Transverse colon (tissue), 4 donors: ENCODE measurements at regions of chr20 and their contacts with region 1.

Region 1: GRCh38 chr20:60372822-60373221 is 414.6 kb downstream of the CDH26 start:
- DNase-seq: no peak
- H3K4me3 ChIP-seq: no peak overlapping the region
- H3K27ac ChIP-seq: no peak overlapping the region
- H3K4me1 ChIP-seq: peaks cover 0 to 3% (median 0%) of the 10 kb centered on the region in 4 donors
- H3K27me3 ChIP-seq: no peaks in the 10 kb centered on the region
- CTCF ChIP-seq: no peak
- EP300 ChIP-seq: no peak
- POLR2A ChIP-seq: no peak

Region 2: GRCh38 chr20:60242836-60243505 is 129.9 kb before region 1 on chr20:
- in situ Hi-C with region 1: no loop called
- intact Hi-C with region 1: no loop called
- DNase-seq: no peak
- H3K4me3 ChIP-seq: no peak overlapping the region
- H3K27ac ChIP-seq: no peak overlapping the region
- H3K4me1 ChIP-seq: no peaks in the 10 kb centered on the region
- H3K27me3 ChIP-seq: no peaks in the 10 kb centered on the region
- CTCF ChIP-seq: no peak
- EP300 ChIP-seq: no peak
- POLR2A ChIP-seq: no peak

Region 3: GRCh38 chr20:60403105-60403741 is 30.4 kb after region 1 on chr20:
- in situ Hi-C with region 1: no loop called
- intact Hi-C with region 1: loop called (anchors 1 kb)
- DNase-seq: no peak
- H3K4me3 ChIP-seq: no peak overlapping the region
- H3K27ac ChIP-seq: no peak overlapping the region
- H3K4me1 ChIP-seq: no peaks in the 10 kb centered on the region
- H3K27me3 ChIP-seq: no peaks in the 10 kb centered on the region
- CTCF ChIP-seq: no peak
- EP300 ChIP-seq: no peak
- POLR2A ChIP-seq: no peak

Region 4: DNA sequence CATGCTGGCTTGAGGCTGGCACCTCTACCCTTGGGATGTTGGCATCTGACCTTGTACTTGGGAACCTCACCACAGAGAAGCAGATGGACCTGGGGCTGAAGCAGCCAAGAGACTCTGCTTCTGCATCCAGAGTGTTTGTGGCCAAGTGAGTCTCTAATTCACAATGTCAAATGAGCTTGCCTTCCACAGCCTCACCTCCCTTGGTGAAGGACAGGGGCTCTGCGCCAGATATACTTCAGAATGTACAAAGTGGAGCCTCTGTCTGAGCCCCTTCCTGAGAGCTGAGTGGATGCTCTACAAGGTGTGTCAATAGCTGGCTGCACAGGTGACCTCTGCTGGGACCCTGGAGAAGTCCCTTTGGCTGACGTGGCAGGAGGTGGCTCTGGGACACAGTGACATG is 94.3 kb after region 1 on chr20:
- in situ Hi-C with region 1: no loop called
- intact Hi-C with region 1: no loop called
- DNase-seq: no peak
- H3K4me3 ChIP-seq: no peak overlapping the region
- H3K27ac ChIP-seq: no peak overlapping the region
- H3K4me1 ChIP-seq: no peaks in the 10 kb centered on the region
- H3K27me3 ChIP-seq: no peaks in the 10 kb centered on the region
- CTCF ChIP-seq: no peak
- EP300 ChIP-seq: no peak
- POLR2A ChIP-seq: no peak

Region 5: DNA sequence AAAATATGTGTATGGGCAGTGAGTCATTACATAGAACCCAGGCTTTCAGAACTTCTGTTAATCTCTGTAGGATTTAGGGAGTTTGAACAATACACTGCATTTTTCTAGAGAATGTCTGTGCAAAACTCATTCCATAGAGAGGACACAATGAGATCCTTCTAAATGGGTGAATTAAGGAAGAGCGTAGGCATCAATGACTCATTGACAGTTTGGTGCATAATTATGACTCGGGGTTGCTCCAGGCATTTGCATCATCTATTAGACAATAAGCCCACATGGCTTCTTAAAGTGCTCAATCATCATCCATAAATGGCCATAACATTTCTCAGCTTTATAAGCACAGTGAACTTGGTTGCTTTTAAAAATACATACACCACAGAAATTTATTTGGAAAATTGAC is 210.9 kb after region 1 on chr20:
- in situ Hi-C with region 1: no loop called
- intact Hi-C with region 1: no loop called
- DNase-seq: no peak
- H3K4me3 ChIP-seq: no peak overlapping the region
- H3K27ac ChIP-seq: no peak overlapping the region
- H3K4me1 ChIP-seq: no peaks in the 10 kb centered on the region
- H3K27me3 ChIP-seq: no peaks in the 10 kb centered on the region
- CTCF ChIP-seq: no peak
- EP300 ChIP-seq: no peak
- POLR2A ChIP-seq: no peak